ENCODE measurements at regions of chr5 and their contacts with region 1.

Region 1: GRCh38 chr5:171336521-171337209 is 27.6 kb downstream of the TLX3 start:
- DNase-seq: peak; percentile 65
- H3K4me3 Mint-ChIP-seq: peak overlapping the region; percentile 44
- H3K27ac Mint-ChIP-seq: no peak overlapping the region
- H3K4me1 Mint-ChIP-seq: peaks cover 3% of the 10 kb centered on the region
- H3K27me3 Mint-ChIP-seq: peaks cover 33% of the 10 kb centered on the region

Region 2: DNA sequence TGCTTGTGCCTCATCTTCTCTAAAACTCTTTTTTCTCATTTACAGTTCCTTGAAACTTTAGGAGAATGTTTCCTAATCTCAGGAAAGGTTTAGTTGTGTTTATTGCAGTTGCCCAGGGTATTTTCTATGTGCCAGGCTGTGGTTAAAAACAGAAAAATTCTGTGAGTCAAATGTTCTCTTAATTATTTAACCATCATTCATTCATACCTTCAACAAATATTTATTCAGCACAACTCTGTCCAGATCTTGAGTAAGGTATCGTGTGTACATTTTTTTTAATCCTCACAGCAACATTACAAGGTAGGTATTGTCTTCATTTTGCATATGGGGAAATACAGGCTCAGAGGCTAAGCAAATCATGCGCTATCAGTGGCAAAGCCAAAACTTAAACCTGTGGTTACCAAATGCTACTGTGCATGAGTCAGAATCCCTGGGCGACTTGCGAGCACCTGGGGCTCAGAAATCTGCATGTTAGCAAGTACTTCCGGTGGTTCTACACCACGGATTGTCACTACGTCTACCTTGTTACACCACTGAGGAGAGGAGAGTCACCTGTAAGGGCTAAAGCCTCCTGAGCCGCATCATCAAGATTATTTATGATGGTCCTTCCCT is 1082.7 kb before region 1 on chr5:
- intact Hi-C with region 1: no loop called
- DNase-seq: peak; percentile 88
- H3K4me3 Mint-ChIP-seq: peak overlapping the region; percentile 26
- H3K27ac Mint-ChIP-seq: peak overlapping the region; percentile 76
- H3K4me1 Mint-ChIP-seq: peaks cover 53% of the 10 kb centered on the region
- H3K27me3 Mint-ChIP-seq: no peaks in the 10 kb centered on the region

Region 3: GRCh38 chr5:171205375-171205774 is 131.3 kb before region 1 on chr5:
- intact Hi-C with region 1: loop called (anchors 2 kb)
- DNase-seq: no peak
- H3K4me3 Mint-ChIP-seq: no peak overlapping the region
- H3K27ac Mint-ChIP-seq: no peak overlapping the region
- H3K4me1 Mint-ChIP-seq: no peaks in the 10 kb centered on the region
- H3K27me3 Mint-ChIP-seq: peaks cover 16% of the 10 kb centered on the region

Region 4: GRCh38 chr5:171308453-171309275 is 28.0 kb before region 1 on chr5 and contains the start of gene TLX3:
- intact Hi-C with region 1: loop called (anchors 2 kb)
- DNase-seq: no peak
- H3K4me3 Mint-ChIP-seq: no peak within 1 kb of the TSS
- H3K27ac Mint-ChIP-seq: peak within 1 kb of the TSS; percentile 64
- H3K4me1 Mint-ChIP-seq: peaks cover 8% of the 10 kb centered on the region
- H3K27me3 Mint-ChIP-seq: peaks cover 63% of the 10 kb centered on the region
- total RNA-seq, gene TLX3: not detected in 2 replicates

Region 5: GRCh38 chr5:171427318-171428167 is 90.9 kb after region 1 on chr5:
- intact Hi-C with region 1: no loop called
- DNase-seq: no peak
- H3K4me3 Mint-ChIP-seq: no peak overlapping the region
- H3K27ac Mint-ChIP-seq: no peak overlapping the region
- H3K4me1 Mint-ChIP-seq: no peaks in the 10 kb centered on the region
- H3K27me3 Mint-ChIP-seq: no peaks in the 10 kb centered on the region

Measured in activated CD4-positive, alpha-beta T cell treated with anti-CD3 and anti-CD28 coated beads, Interleukin-2, amount 10 ng/mL, durations not matched to agents 24 days and 14 days (primary cell).